ENCODE measurements at regions of chr7 and their contacts with region 1.

Region 1: GRCh38 chr7:4775250-4775847 is at the start of gene AP5Z1:
- H3K4me3 Mint-ChIP-seq: peak within 1 kb of the TSS; percentile 100
- H3K27ac Mint-ChIP-seq: peak within 1 kb of the TSS; percentile 100
- H3K4me1 Mint-ChIP-seq: peaks cover 35% of the 10 kb centered on the region
- H3K27me3 Mint-ChIP-seq: no peaks in the 10 kb centered on the region

Region 2: GRCh38 chr7:4641667-4642467 is 133.5 kb before region 1 on chr7:
- intact Hi-C with region 1: loop called (anchors 2 kb)
- H3K4me3 Mint-ChIP-seq: peak overlapping the region; percentile 91
- H3K27ac Mint-ChIP-seq: peak overlapping the region; percentile 91
- H3K4me1 Mint-ChIP-seq: peaks cover 6% of the 10 kb centered on the region
- H3K27me3 Mint-ChIP-seq: peaks cover 1% of the 10 kb centered on the region

Region 3: DNA sequence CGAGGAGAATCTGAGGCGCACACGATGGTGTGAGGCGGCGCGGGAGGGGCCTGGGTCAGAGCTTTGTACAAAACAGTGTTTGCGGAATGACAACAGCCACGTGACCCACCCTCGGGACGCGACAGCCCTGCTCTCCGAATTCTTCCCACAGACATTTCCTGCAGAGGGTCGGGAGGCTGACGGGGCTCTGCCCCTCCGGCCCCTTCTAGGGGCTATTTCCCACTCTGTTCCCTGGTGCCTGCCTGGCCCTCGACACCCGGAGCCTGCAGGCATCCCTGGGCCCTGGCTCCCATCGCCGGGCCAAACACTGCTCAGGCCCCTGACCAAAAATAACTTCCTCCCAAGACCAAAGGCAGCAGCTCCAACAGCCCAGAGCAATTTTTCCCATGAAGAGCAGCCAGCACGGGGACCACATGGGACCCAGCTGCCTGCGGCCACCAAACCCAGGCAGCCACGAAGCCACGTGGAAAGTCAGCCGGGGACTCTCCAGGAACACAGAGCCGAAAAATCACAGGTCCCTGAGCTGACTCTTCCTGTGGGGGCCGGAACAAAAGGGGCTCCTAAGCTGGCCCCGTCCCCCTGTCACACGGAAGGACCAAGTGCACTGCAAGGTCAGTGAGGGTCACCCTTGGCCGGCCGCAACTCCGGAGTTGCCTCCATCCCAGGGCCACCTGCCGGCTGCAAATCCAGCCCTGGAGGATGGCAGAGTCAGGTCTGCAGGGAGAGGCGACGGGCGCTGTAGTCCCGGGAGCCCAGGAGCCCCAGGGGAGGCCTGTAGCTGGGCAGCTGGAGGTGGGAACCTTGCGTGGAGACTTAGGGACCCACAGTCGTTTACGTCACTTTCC is 44.4 kb after region 1 on chr7:
- intact Hi-C with region 1: no loop called
- H3K4me3 Mint-ChIP-seq: no peak overlapping the region
- H3K27ac Mint-ChIP-seq: no peak overlapping the region
- H3K4me1 Mint-ChIP-seq: peaks cover 1% of the 10 kb centered on the region
- H3K27me3 Mint-ChIP-seq: peaks cover 8% of the 10 kb centered on the region

Measured in dendritic cell treated with granulocyte-macrophage colony-stimulating factor and Interleukin-4, amounts not matched to agents 40 ng/mL and 50 ng/mL, for 4 days (primary cell).